Caco-2 (cell line): ENCODE measurements at regions of chr20 and their contacts with region 1.

Region 1: DNA sequence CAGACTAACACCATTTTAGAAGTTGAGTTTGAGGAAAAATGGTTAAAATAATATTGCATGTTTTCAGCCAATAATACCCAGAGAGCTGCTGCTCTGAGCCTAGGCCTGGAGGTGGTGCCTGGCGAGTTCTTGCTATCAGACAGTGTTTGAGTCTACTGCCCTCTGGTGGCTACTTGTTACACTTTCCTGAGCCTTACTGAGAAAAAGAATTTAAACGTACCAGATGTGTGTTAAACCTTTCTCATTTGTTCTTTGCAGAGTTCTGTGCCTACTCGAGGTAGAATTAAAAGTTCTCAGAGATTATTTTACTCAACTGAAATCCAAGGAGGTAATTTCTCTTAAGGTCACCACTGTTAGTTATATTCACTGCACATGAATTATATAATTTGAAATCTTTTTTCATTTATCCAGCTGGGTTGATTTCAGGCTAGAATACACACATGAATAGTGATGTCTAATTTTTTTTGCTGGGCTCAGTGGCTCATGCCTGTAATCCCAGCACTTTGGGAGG is 38.2 kb downstream of the SHLD1 start:
- DNase-seq: peak; percentile 82 to 83
- H3K4me3 ChIP-seq: no peak overlapping the region
- H3K4me3 Mint-ChIP-seq: no peak overlapping the region
- H3K27ac Mint-ChIP-seq: no peak overlapping the region
- H3K4me1 ChIP-seq: peaks cover 8% of the 10 kb centered on the region
- H3K4me1 Mint-ChIP-seq: peaks cover 7% of the 10 kb centered on the region
- H3K27me3 ChIP-seq: no peaks in the 10 kb centered on the region
- H3K27me3 Mint-ChIP-seq: no peaks in the 10 kb centered on the region
- CTCF ChIP-seq: peak; percentile 86 to 96

Region 2: GRCh38 chr20:5557123-5557522 is 231.3 kb before region 1 on chr20:
- CTCF ChIA-PET with region 1: interaction called, 17 read pairs
- POLR2A ChIA-PET with region 1: no interaction called
- intact Hi-C with region 1: loop called (anchors 1 kb)
- DNase-seq: peak; percentile 55 to 72
- H3K4me3 ChIP-seq: no peak overlapping the region
- H3K4me3 Mint-ChIP-seq: no peak overlapping the region
- H3K27ac Mint-ChIP-seq: no peak overlapping the region
- H3K4me1 ChIP-seq: no peaks in the 10 kb centered on the region
- H3K4me1 Mint-ChIP-seq: peaks cover 4% of the 10 kb centered on the region
- H3K27me3 ChIP-seq: no peaks in the 10 kb centered on the region
- H3K27me3 Mint-ChIP-seq: no peaks in the 10 kb centered on the region
- CTCF ChIP-seq: peak; percentile 44 to 78

Region 3: GRCh38 chr20:5569021-5569420 is 219.4 kb before region 1 on chr20:
- CTCF ChIA-PET with region 1: interaction called, 5 read pairs
- POLR2A ChIA-PET with region 1: interaction called, 3 read pairs
- intact Hi-C with region 1: loop called (anchors 1 kb)
- DNase-seq: peak in 1 of 2 experiments; percentile 58
- H3K4me3 ChIP-seq: no peak overlapping the region
- H3K4me3 Mint-ChIP-seq: no peak overlapping the region
- H3K27ac Mint-ChIP-seq: no peak overlapping the region
- H3K4me1 ChIP-seq: no peaks in the 10 kb centered on the region
- H3K4me1 Mint-ChIP-seq: no peaks in the 10 kb centered on the region
- H3K27me3 ChIP-seq: no peaks in the 10 kb centered on the region
- H3K27me3 Mint-ChIP-seq: no peaks in the 10 kb centered on the region
- CTCF ChIP-seq: peak; percentile 54 to 55

Region 4: GRCh38 chr20:5674176-5674660 is 114.2 kb before region 1 on chr20:
- CTCF ChIA-PET with region 1: no interaction called
- POLR2A ChIA-PET with region 1: no interaction called
- intact Hi-C with region 1: loop called (anchors 10 kb)
- DNase-seq: no peak
- H3K4me3 ChIP-seq: no peak overlapping the region
- H3K4me3 Mint-ChIP-seq: no peak overlapping the region
- H3K27ac Mint-ChIP-seq: no peak overlapping the region
- H3K4me1 ChIP-seq: no peaks in the 10 kb centered on the region
- H3K4me1 Mint-ChIP-seq: no peaks in the 10 kb centered on the region
- H3K27me3 ChIP-seq: no peaks in the 10 kb centered on the region
- H3K27me3 Mint-ChIP-seq: no peaks in the 10 kb centered on the region
- CTCF ChIP-seq: no peak